ENCODE measurements at regions of chr18 and their contacts with region 1.

Region 1: DNA sequence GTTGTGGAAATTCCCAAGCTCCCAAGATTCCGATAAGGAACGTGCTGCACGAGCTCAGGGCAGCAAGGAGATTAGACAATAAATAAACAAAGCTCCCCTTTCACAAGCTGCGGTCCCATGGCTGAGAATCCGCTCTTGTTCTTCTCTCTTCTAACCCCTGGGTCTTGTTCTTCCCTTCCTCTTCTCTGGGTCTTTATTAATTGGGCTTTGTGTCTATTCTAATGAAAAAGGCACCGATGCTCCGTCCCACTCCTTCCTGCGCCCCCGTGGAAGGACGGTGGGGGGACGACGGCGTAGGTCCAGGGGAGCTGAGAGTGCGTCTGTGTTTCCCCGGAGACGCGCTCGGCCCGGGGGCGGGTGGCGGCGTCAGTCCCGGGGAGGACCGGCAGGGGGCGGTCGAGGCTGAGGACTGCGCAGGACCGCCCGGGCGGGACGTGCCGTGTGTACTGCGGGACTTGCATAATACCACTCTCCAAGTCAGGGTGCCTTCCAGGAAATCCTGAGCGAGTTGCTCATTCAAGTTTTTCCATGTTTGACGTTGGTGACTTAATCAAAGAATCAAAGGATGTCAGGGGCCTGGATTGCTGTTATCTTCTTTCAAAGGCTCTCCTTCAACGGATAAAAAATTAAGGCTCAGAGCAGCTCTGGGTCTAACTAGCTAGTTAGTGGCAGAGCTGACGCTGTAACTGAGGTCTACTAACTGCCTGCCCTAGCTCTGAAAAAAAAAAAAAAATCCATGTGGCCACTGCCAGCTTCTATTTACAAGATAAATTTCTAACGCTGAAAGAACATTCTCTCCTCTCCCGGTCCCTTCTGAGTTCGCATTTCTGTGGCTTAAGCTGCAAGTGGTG is 321.4 kb downstream of the TGIF1 start:
- DNase-seq: peak; percentile 91 to 95 (median 92)
- H3K4me3 ChIP-seq: peak overlapping the region in 1 of 4 donors; percentile 49
- H3K27ac ChIP-seq: peak overlapping the region in 4 of 5 donors; percentile 33 to 88 (median 75)
- H3K4me1 ChIP-seq: peaks cover 3 to 4% of the 10 kb centered on the region in 2 donors
- H3K27me3 ChIP-seq: no peaks in the 10 kb centered on the region
- CTCF ChIP-seq: peak; percentile 92 to 99 (median 98)
- POLR2A ChIP-seq: no peak

Region 2: GRCh38 chr18:3722320-3723000 is 48.9 kb before region 1 on chr18:
- intact Hi-C with region 1: no loop called
- DNase-seq: peak in 1 of 7 donors; percentile 23
- H3K4me3 ChIP-seq: no peak overlapping the region
- H3K27ac ChIP-seq: peak overlapping the region in 2 of 5 donors; percentile 50 to 55
- H3K4me1 ChIP-seq: peaks cover 6 to 29% of the 10 kb centered on the region in 2 donors
- H3K27me3 ChIP-seq: no peaks in the 10 kb centered on the region
- CTCF ChIP-seq: no peak
- POLR2A ChIP-seq: no peak

Region 3: DNA sequence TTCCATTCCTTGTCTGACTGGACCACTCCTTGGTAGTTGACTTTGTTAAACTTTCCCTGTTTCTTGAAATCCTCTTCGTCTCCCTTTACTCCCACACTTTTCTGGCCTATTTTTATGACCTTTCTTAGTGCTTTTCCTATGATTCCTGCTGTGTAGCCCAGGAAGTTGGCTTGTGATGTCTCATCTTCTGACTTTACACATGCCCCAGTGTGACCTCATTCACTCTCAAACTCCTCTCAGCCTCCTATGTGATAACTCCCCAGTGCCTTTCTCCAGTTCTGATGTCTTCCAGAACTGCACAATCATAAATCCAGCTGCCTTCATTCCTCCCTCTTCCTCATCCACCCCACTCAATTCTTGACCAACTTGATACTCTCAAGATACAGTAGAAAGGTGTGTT is 86.2 kb after region 1 on chr18:
- intact Hi-C with region 1: no loop called
- DNase-seq: no peak
- H3K4me3 ChIP-seq: no peak overlapping the region
- H3K27ac ChIP-seq: no peak overlapping the region
- H3K4me1 ChIP-seq: no peaks in the 10 kb centered on the region
- H3K27me3 ChIP-seq: no peaks in the 10 kb centered on the region
- CTCF ChIP-seq: no peak
- POLR2A ChIP-seq: no peak

Region 4: DNA sequence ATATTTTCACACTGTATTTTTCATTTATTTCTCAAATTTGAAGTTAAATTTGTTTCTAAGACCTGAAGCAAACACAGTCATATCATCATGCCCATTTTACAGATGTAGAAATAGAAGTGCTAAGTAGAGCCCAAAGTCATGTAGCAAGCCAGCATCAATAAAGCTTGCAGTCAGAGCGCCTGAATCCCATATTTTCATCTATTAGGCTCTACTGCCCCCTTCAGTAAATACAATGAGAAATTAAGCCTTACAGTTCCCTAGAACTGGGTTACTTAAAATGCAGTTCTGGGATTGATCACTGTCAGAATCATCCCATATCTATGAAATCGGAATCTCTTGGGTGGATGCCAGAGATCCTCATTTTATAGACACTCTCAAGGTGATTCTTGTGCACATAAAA is 98.5 kb after region 1 on chr18:
- intact Hi-C with region 1: loop called in 1 of 2 experiments (anchors 5 kb)
- DNase-seq: peak in 2 of 7 donors; percentile 22 to 36
- H3K4me3 ChIP-seq: no peak overlapping the region
- H3K27ac ChIP-seq: no peak overlapping the region
- H3K4me1 ChIP-seq: peaks cover 0 to 2% of the 10 kb centered on the region in 2 donors
- H3K27me3 ChIP-seq: no peaks in the 10 kb centered on the region
- CTCF ChIP-seq: peak; percentile 23 to 77 (median 68)
- POLR2A ChIP-seq: no peak

Region 5: DNA sequence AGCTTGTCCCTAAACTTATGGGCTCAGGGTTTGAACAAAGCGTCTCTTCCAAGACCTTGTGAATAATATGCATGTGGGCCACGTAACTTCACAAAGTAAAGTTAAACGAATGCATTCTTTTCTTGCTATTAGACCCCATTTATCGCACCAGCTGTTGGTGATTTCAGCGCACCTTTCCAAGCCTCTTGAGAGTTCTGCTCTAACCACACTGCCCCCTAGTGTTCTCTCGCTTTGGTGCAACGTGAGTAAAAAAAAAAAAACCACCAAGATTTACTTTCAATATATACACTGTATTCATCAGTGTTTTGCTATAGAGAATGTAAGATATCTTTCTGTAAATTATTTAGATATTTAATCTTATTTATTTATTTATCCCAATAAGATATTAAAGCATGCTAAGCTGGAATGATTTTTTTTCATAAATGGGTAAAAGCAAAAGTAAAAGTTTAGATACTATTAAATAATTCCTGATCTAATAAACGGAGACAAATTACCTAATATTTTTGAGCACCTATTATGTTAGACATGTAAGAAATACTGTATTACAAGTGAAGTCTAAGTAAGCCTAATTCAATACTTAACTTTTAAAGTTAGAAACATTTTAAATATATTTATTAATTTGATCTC is 224.2 kb after region 1 on chr18:
- intact Hi-C with region 1: loop called (anchors 5 to 10 kb)
- DNase-seq: peak; percentile 54 to 80 (median 74)
- H3K4me3 ChIP-seq: peak overlapping the region in 1 of 4 donors; percentile 41
- H3K27ac ChIP-seq: peak overlapping the region in 1 of 5 donors; percentile 41
- H3K4me1 ChIP-seq: no peaks in the 10 kb centered on the region
- H3K27me3 ChIP-seq: no peaks in the 10 kb centered on the region
- CTCF ChIP-seq: peak; percentile 57 to 94 (median 82)
- POLR2A ChIP-seq: no peak